ENCODE measurements at regions of chr12 and their contacts with region 1.

Region 1: GRCh38 chr12:49232940-49233841 is 31.7 kb upstream of the TUBA1C start:
- DNase-seq: peak; percentile 80
- H3K4me3 ChIP-seq: peak overlapping the region in 3 of 4 donors; percentile 51 to 59 (median 54)
- H3K27ac ChIP-seq: peak overlapping the region; percentile 85 to 94 (median 88)
- H3K4me1 ChIP-seq: peaks cover 0 to 30% (median 27%) of the 10 kb centered on the region in 4 donors
- H3K27me3 ChIP-seq: no peaks in the 10 kb centered on the region
- CTCF ChIP-seq: peak in 1 of 4 experiments; percentile 30
- EP300 ChIP-seq: no peak
- POLR2A ChIP-seq: no peak

Region 2: GRCh38 chr12:49060237-49061156 is 172.7 kb before region 1 on chr12 and contains the start of gene KMT2D:
- intact Hi-C with region 1: loop called (anchors 1 kb)
- DNase-seq: peak; percentile 96
- H3K4me3 ChIP-seq: peak within 1 kb of the TSS; percentile 87 to 100 (median 98)
- H3K27ac ChIP-seq: peak within 1 kb of the TSS; percentile 94 to 99 (median 96)
- H3K4me1 ChIP-seq: peaks cover 0 to 51% (median 42%) of the 10 kb centered on the region in 4 donors
- H3K27me3 ChIP-seq: no peaks in the 10 kb centered on the region
- CTCF ChIP-seq: peak; percentile 46 to 86 (median 67)
- EP300 ChIP-seq: peak in 1 of 4 donors; percentile 36
- POLR2A ChIP-seq: peak; percentile 45 to 58
- total RNA-seq, gene KMT2D: 18.2 to 52.9 (median 30.6) TPM

Region 3: GRCh38 chr12:49088190-49088931 is 144.8 kb before region 1 on chr12:
- intact Hi-C with region 1: loop called (anchors 1 kb)
- DNase-seq: peak; percentile 87
- H3K4me3 ChIP-seq: no peak overlapping the region
- H3K27ac ChIP-seq: peak overlapping the region in 1 of 4 donors; percentile 20
- H3K4me1 ChIP-seq: peaks cover 0 to 51% (median 39%) of the 10 kb centered on the region in 4 donors
- H3K27me3 ChIP-seq: peaks cover 41 to 51% (median 49%) of the 10 kb centered on the region in 3 donors
- CTCF ChIP-seq: peak; percentile 69 to 92 (median 82)
- EP300 ChIP-seq: no peak
- POLR2A ChIP-seq: no peak

Region 4: GRCh38 chr12:49130151-49131050 is 102.8 kb before region 1 on chr12:
- intact Hi-C with region 1: loop called (anchors 1 kb)
- DNase-seq: peak; percentile 97
- H3K4me3 ChIP-seq: peak overlapping the region; percentile 94 to 99 (median 98)
- H3K27ac ChIP-seq: peak overlapping the region; percentile 99 to 100 (median 100)
- H3K4me1 ChIP-seq: peaks cover 0 to 30% (median 27%) of the 10 kb centered on the region in 4 donors
- H3K27me3 ChIP-seq: no peaks in the 10 kb centered on the region
- CTCF ChIP-seq: peak; percentile 82 to 96 (median 90)
- EP300 ChIP-seq: no peak
- POLR2A ChIP-seq: no peak

Region 5: DNA sequence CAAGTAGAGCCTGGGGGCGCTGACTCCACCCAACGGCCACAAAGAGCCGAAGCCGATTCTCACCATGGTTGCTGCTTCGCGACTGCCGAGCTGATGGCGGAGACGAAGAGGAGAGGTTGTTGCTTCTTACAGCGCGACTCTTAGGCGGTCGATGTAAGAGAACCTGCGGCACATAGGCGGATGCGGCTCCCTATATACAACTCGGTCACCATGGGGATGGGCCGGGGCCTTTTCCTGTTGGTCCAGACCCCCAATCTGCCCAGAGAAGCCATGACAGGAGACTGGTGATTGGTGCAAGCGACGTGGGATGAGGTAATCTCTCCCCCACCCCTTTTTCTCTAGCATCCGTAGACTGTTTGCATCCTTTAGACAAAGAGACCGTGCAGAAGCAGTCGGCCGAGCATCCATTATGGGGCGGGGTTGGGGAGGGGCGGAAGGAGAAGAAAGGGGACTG is 44.2 kb before region 1 on chr12 and contains the start of gene TUBA1A:
- intact Hi-C with region 1: loop called (anchors 1 kb)
- DNase-seq: peak; percentile 99
- H3K4me3 ChIP-seq: peak within 1 kb of the TSS; percentile 78 to 99 (median 94)
- H3K27ac ChIP-seq: peak within 1 kb of the TSS; percentile 95 to 100 (median 100)
- H3K4me1 ChIP-seq: peaks cover 0 to 33% (median 26%) of the 10 kb centered on the region in 4 donors
- H3K27me3 ChIP-seq: no peaks in the 10 kb centered on the region
- CTCF ChIP-seq: no peak
- EP300 ChIP-seq: no peak
- POLR2A ChIP-seq: peak; percentile 95 to 96
- total RNA-seq, gene TUBA1A: 614 to 677 (median 635) TPM

Region 6: GRCh38 chr12:49200919-49201594 is 32.1 kb before region 1 on chr12:
- intact Hi-C with region 1: loop called (anchors 1 kb)
- DNase-seq: no peak
- H3K4me3 ChIP-seq: peak overlapping the region in 2 of 4 donors; percentile 18 to 31
- H3K27ac ChIP-seq: peak overlapping the region; percentile 81 to 93 (median 85)
- H3K4me1 ChIP-seq: peaks cover 0 to 40% (median 30%) of the 10 kb centered on the region in 4 donors
- H3K27me3 ChIP-seq: no peaks in the 10 kb centered on the region
- CTCF ChIP-seq: no peak
- EP300 ChIP-seq: peak; percentile 50 to 86 (median 58)
- POLR2A ChIP-seq: no peak

Measured in sigmoid colon (tissue), 7 donors.